ENCODE measurements at regions of chr14 and their contacts with region 1.

Region 1: DNA sequence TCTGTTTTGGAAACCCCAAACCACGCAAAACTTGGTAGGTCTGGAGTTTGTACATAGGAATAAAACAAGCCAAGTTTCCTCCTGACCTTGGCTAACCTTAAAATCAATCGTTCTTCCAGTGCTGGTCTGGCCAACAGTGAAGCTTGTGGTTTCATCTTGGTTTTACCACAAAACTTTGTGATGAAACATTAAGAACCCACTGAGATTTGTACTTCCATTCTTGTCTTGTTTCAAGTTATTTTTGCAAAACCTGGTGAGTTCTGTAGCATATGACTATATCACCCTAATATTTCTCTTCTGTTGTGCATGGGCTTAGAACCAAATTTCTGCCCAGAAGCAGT is 26.4 kb downstream of the SIX1 start:
- DNase-seq: no peak
- H3K4me3 Mint-ChIP-seq: no peak overlapping the region
- H3K27ac Mint-ChIP-seq: no peak overlapping the region
- H3K4me1 Mint-ChIP-seq: peaks cover 26% of the 10 kb centered on the region
- H3K27me3 Mint-ChIP-seq: no peaks in the 10 kb centered on the region
- CTCF ChIP-seq: no peak

Region 2: GRCh38 chr14:61103481-61104339 is 480.8 kb after region 1 on chr14:
- CTCF ChIA-PET with region 1: no interaction called
- intact Hi-C with region 1: loop called (anchors 10 kb)
- DNase-seq: peak; percentile 77
- H3K4me3 Mint-ChIP-seq: no peak overlapping the region
- H3K27ac Mint-ChIP-seq: peak overlapping the region; percentile 93
- H3K4me1 Mint-ChIP-seq: peaks cover 31% of the 10 kb centered on the region
- H3K27me3 Mint-ChIP-seq: no peaks in the 10 kb centered on the region
- CTCF ChIP-seq: no peak